ENCODE measurements at regions of chr12 and their contacts with region 1.

Region 1: GRCh38 chr12:57520053-57520871 is at the start of gene DDIT3:
- DNase-seq: peak; percentile 100
- ATAC-seq: peak; percentile 76
- H3K4me3 Mint-ChIP-seq: peak within 1 kb of the TSS; percentile 96
- H3K27ac Mint-ChIP-seq: peak within 1 kb of the TSS; percentile 99
- H3K4me1 Mint-ChIP-seq: peaks cover 53% of the 10 kb centered on the region
- H3K27me3 Mint-ChIP-seq: no peaks in the 10 kb centered on the region
- total RNA-seq, gene DDIT3: 31.2 to 32.2 TPM

Region 2: DNA sequence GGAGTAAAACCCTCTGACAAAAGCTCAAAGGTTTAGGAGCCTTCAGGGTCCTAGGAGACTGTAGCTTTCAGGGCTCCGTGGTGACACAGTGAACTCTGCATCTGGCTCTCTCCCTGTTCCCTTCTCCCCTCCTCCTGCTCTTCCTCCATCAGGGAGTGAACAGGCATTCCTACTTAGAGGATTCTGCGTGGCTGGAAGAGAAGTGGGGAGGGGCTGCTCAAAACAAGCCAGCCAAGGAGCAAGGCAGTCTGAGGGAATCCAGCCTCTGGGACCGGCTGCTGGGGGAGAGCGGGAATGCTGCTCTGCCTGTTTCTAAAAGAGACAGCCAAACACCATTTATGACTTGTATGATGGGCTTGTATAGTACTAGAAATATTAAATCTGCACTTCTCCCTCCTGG is 949.1 kb before region 1 on chr12:
- CTCF ChIA-PET with region 1: no interaction called
- POLR2A ChIA-PET with region 1: no interaction called
- intact Hi-C with region 1: no loop called
- DNase-seq: no peak
- ATAC-seq: no peak
- H3K4me3 Mint-ChIP-seq: no peak overlapping the region
- H3K27ac Mint-ChIP-seq: no peak overlapping the region
- H3K4me1 Mint-ChIP-seq: peaks cover 25% of the 10 kb centered on the region
- H3K27me3 Mint-ChIP-seq: no peaks in the 10 kb centered on the region

Region 3: GRCh38 chr12:56636675-56637540 is 883.4 kb before region 1 on chr12:
- CTCF ChIA-PET with region 1: no interaction called
- POLR2A ChIA-PET with region 1: no interaction called
- intact Hi-C with region 1: loop called in 1 of 2 experiments (anchors 5 kb)
- DNase-seq: peak; percentile 98
- ATAC-seq: peak; percentile 73
- H3K4me3 Mint-ChIP-seq: peak overlapping the region; percentile 87
- H3K27ac Mint-ChIP-seq: peak overlapping the region; percentile 92
- H3K4me1 Mint-ChIP-seq: peaks cover 60% of the 10 kb centered on the region
- H3K27me3 Mint-ChIP-seq: no peaks in the 10 kb centered on the region

Region 4: DNA sequence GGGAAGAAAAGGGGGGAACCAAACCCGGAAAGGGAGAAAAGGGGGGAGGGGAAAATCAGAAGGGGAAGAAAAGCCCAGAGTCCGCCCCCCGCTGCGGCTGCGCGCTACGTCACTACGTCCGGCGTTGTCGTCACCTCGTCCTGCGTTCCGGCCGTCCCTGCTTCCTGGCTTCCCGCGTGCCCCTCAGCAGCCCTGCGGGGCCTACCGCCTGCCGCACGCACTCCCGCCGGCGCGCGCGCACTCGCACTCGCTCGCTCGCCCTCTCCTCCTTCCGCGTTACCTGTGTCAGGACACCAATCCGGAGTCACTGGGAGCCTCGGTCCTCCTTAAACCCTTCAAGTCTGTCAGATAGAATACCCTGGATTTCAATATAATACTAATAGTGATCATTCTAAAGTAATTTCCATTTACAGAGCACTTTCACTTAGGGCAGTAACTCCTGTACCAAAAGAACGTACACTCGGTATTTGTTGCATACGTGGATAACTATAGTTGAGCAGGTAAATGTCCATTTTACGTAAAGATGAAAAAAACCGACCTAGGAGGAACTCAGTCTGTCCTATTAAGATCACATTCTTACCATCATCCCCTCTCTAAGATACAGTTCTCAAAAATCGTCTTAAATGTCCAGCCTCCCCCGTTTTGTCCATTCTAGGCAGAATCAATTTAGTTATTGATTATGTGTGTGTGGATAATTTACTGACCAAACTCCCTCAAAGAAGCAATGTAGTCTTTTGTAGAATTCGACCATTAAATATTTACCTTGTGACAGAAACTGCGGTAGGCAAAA is 89.1 kb before region 1 on chr12 and contains the start of gene R3HDM2:
- CTCF ChIA-PET with region 1: no interaction called
- POLR2A ChIA-PET with region 1: no interaction called
- intact Hi-C with region 1: loop called in 1 of 2 experiments (anchors 1 kb)
- DNase-seq: peak; percentile 97
- ATAC-seq: peak; percentile 95
- H3K4me3 Mint-ChIP-seq: peak within 1 kb of the TSS; percentile 89
- H3K27ac Mint-ChIP-seq: peak within 1 kb of the TSS; percentile 100
- H3K4me1 Mint-ChIP-seq: peaks cover 35% of the 10 kb centered on the region
- H3K27me3 Mint-ChIP-seq: no peaks in the 10 kb centered on the region
- total RNA-seq, gene R3HDM2: 45.9 to 52.5 TPM

Region 5: GRCh38 chr12:57487597-57488401 is 32.5 kb before region 1 on chr12 and contains the start of gene MARS1:
- CTCF ChIA-PET with region 1: no interaction called
- POLR2A ChIA-PET with region 1: interaction called, 6 read pairs
- intact Hi-C with region 1: loop called (anchors 1 kb)
- DNase-seq: peak; percentile 96
- ATAC-seq: peak; percentile 98
- H3K4me3 Mint-ChIP-seq: peak within 1 kb of the TSS; percentile 100
- H3K27ac Mint-ChIP-seq: peak within 1 kb of the TSS; percentile 94
- H3K4me1 Mint-ChIP-seq: peaks cover 35% of the 10 kb centered on the region
- H3K27me3 Mint-ChIP-seq: no peaks in the 10 kb centered on the region
- total RNA-seq, gene MARS1: 389 to 583 TPM

Region 6: GRCh38 chr12:57693659-57694458 is 173.6 kb after region 1 on chr12 and contains the start of gene OS9:
- CTCF ChIA-PET with region 1: no interaction called
- POLR2A ChIA-PET with region 1: no interaction called
- intact Hi-C with region 1: loop called (anchors 1 kb)
- DNase-seq: peak; percentile 96
- ATAC-seq: peak; percentile 98
- H3K4me3 Mint-ChIP-seq: no peak within 1 kb of the TSS
- H3K27ac Mint-ChIP-seq: no peak within 1 kb of the TSS
- H3K4me1 Mint-ChIP-seq: peaks cover 4% of the 10 kb centered on the region
- H3K27me3 Mint-ChIP-seq: peaks cover 8% of the 10 kb centered on the region
- total RNA-seq, gene OS9: 61.7 to 63.2 TPM

Region 7: DNA sequence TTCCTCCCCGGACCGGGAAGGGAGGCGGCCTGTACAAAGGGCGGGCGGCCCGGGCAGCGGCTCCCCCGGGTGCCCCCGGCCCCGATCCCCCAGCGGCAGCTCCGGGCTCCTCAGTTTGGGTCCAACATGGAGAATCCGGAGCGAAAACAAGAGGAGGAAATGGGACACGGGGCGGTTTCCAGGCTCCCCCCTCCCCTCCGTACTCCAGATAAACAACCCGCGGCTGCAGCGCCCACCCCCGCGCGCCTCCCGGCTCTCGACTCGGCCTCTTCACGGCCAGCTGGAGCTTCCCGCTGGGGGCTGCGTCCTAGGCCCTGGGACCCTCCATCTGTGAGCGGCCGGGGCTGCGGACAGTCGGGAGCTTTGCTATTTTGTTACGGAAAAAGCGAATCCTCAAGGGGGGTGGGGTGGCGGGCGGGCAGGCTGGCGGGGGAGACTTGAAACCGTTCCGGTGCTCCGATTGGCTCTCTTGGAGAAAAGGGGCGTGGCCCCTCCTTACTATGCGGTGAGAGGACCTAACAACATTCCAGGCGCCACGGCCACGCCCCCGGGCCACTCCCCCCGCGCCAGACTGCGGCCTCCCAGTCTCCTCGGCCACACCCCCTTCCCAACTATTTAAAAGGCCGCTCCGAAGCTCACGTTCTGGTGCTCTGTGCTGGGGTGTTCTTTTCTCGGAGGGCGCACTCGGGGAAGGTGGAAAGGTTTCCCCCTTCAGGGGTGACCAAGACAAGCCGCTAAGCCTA is 326.5 kb after region 1 on chr12 and contains the start of gene CTDSP2:
- CTCF ChIA-PET with region 1: no interaction called
- POLR2A ChIA-PET with region 1: no interaction called
- intact Hi-C with region 1: loop called in 1 of 2 experiments (anchors 2 kb)
- DNase-seq: peak; percentile 94
- ATAC-seq: peak; percentile 43
- H3K4me3 Mint-ChIP-seq: peak within 1 kb of the TSS; percentile 78
- H3K27ac Mint-ChIP-seq: peak within 1 kb of the TSS; percentile 70
- H3K4me1 Mint-ChIP-seq: peaks cover 44% of the 10 kb centered on the region
- H3K27me3 Mint-ChIP-seq: peaks cover 5% of the 10 kb centered on the region
- total RNA-seq, gene CTDSP2: 80.9 to 85.4 TPM

Measured in activated CD4-positive, alpha-beta T cell treated with anti-CD3 and anti-CD28 coated beads for 36 hours (primary cell).